Breast epithelium (tissue), 4 donors: ENCODE measurements at regions of chr19 and their contacts with region 1.

Region 1: GRCh38 chr19:45311621-45312020 is 11.1 kb downstream of the CKM start:
- DNase-seq: no peak
- H3K4me3 ChIP-seq: no peak overlapping the region
- H3K27ac ChIP-seq: no peak overlapping the region
- H3K4me1 ChIP-seq: no peaks in the 10 kb centered on the region
- H3K27me3 ChIP-seq: peaks cover 0 to 4% of the 10 kb centered on the region in 2 donors
- CTCF ChIP-seq: no peak
- POLR2A ChIP-seq: no peak

Region 2: DNA sequence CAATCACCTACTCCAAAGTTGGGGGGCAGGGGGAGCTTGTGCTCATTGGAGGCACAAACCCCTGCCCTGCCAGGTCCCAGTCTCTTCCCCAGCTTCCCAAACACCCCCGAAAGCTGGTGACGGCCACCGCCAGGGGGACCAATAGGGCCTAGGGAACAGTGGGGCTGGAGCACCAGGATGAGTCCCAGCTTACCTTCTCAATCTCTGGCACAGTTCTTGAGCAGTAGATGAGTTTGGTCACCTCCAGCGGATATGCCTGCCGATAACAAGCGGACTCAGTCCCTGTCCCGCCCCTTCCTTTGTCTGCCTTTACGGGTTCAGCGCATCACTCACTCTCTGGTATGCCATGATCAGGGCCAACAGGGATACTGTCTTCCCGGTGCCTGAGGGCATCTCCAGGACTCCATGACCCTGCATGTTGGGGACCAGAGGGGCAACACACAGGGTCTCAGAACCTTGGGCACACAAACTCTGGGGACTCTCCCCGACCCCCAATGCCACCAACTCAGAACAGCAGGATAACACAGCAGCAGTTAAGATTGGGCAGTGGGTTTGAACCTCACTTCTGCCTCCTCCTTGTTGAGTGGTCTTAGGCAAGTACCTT is 57.2 kb after region 1 on chr19:
- intact Hi-C with region 1: loop called (anchors 2 kb)
- DNase-seq: no peak
- H3K4me3 ChIP-seq: no peak overlapping the region
- H3K27ac ChIP-seq: no peak overlapping the region
- H3K4me1 ChIP-seq: no peaks in the 10 kb centered on the region
- H3K27me3 ChIP-seq: no peaks in the 10 kb centered on the region
- CTCF ChIP-seq: no peak
- POLR2A ChIP-seq: no peak

Region 3: GRCh38 chr19:45409557-45409920 is 97.9 kb after region 1 on chr19:
- intact Hi-C with region 1: no loop called
- DNase-seq: no peak
- H3K4me3 ChIP-seq: no peak overlapping the region
- H3K27ac ChIP-seq: no peak overlapping the region
- H3K4me1 ChIP-seq: peaks cover 0 to 9% of the 10 kb centered on the region in 2 donors
- H3K27me3 ChIP-seq: no peaks in the 10 kb centered on the region
- CTCF ChIP-seq: no peak
- POLR2A ChIP-seq: no peak

Region 4: GRCh38 chr19:45421947-45422498 is 110.4 kb after region 1 on chr19:
- intact Hi-C with region 1: no loop called
- DNase-seq: no peak
- H3K4me3 ChIP-seq: no peak overlapping the region
- H3K27ac ChIP-seq: peak overlapping the region in 1 of 2 donors; percentile 45
- H3K4me1 ChIP-seq: peaks cover 0 to 8% of the 10 kb centered on the region in 2 donors
- H3K27me3 ChIP-seq: no peaks in the 10 kb centered on the region
- CTCF ChIP-seq: no peak
- POLR2A ChIP-seq: no peak